ENCODE measurements at regions of chr17 and their contacts with region 1.

Region 1: DNA sequence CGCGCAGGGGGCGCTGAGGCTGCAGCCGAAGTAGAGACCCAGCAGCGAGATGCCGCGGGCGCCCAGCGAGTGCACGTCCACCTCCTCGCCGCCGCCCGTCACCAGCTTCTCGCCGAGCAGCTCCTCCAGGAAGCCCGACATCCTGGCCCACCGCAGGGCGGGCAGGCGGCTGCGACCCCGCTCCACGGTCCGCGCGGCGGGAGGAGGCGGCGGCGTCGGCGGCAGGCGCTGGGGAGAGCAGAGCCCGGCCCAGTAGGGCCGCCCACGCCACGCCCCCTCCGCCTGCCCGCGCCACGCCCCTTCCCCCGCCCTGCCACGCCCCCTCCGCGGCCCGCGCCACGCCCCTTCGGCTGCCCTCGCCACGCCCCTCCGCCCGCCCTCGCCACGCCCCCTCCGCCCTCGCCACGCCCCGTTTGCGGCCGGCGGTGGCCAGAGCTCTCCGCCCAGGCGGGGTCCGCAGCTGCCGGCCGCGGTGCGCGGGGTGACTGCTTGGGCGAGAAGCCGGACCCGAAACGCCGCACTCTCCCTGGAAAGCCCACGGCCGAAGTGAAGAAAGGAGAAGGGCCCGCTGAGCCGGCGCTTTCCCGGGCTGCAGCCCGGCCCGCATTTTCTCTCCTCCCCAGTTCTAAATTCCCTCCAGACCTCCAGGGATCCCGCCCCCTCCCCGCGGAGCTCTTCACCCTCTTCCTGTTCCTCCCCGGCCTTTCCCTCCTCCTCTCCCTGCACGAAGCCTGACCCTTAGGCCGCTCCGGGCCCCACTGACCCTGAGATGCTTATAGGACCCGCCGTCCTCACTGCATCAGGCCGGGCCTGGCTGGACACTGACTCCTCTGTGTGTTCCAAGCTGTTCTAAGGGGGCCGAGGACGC is at the start of gene NXN:
- DNase-seq: peak; percentile 87
- H3K4me3 ChIP-seq: peak within 1 kb of the TSS; percentile 56 to 80
- H3K27ac ChIP-seq: peak within 1 kb of the TSS; percentile 83 to 93
- H3K4me1 ChIP-seq: peaks cover 7% of the 10 kb centered on the region
- H3K27me3 ChIP-seq: no peaks in the 10 kb centered on the region
- CTCF ChIP-seq: peak in 2 of 4 experiments; percentile 43 to 45
- POLR2A ChIP-seq: peak; percentile 86
- total RNA-seq, gene NXN: 56.2 to 56.7 TPM

Region 2: GRCh38 chr17:732067-732901 is 247.5 kb before region 1 on chr17 and contains the start of gene TLCD3A:
- intact Hi-C with region 1: loop called (anchors 10 kb)
- DNase-seq: peak; percentile 75
- H3K4me3 ChIP-seq: peak within 1 kb of the TSS; percentile 75 to 80
- H3K27ac ChIP-seq: peak within 1 kb of the TSS; percentile 88 to 92
- H3K4me1 ChIP-seq: peaks cover 4% of the 10 kb centered on the region
- H3K27me3 ChIP-seq: no peaks in the 10 kb centered on the region
- CTCF ChIP-seq: no peak
- POLR2A ChIP-seq: peak; percentile 57
- total RNA-seq, gene TLCD3A: 8.1 to 12.0 TPM